A673 (cell line): ENCODE measurements at regions of chr17 and their contacts with region 1.

Region 1: DNA sequence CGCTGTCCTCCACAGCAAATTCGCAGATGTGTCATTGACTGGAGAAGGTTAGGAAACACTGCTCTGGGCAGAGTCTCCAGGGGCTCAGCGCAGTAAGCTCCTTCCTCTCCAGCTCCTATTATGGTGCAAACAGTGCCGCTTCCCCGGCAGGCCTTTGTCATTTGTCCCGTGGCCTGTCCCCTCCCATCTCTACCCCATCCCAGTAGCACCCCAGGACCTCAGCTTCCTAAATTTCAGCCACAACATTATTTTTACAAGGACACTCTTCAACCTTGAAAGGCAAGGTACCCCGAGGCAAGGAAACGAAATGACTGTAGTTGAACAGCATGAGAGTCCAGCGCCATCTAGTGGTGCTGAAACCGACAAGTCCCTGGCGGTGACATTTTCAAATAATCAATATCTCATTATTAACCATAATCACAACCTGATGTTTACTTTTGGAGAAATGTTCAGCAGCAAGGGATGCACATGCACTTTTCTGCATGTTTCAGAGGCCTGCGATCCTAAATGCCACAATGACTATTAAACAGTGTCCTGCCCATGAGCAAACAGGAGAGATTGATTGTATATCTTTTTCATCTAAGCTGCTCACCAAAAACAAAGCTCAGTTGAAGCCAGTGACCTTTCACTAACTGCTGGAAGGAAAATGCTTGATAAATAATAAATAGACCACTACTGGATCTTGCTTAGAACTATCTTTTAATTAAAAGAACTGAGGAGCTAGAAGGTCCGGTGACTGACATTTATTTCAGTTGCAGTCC is 16.5 kb downstream of the MRPS23 start:
- DNase-seq: peak; percentile 84
- H3K4me3 ChIP-seq: peak overlapping the region; percentile 39
- H3K27ac ChIP-seq: no peak overlapping the region
- H3K4me1 ChIP-seq: peaks cover 10% of the 10 kb centered on the region
- H3K27me3 ChIP-seq: no peaks in the 10 kb centered on the region
- CTCF ChIP-seq: peak; percentile 99

Region 2: DNA sequence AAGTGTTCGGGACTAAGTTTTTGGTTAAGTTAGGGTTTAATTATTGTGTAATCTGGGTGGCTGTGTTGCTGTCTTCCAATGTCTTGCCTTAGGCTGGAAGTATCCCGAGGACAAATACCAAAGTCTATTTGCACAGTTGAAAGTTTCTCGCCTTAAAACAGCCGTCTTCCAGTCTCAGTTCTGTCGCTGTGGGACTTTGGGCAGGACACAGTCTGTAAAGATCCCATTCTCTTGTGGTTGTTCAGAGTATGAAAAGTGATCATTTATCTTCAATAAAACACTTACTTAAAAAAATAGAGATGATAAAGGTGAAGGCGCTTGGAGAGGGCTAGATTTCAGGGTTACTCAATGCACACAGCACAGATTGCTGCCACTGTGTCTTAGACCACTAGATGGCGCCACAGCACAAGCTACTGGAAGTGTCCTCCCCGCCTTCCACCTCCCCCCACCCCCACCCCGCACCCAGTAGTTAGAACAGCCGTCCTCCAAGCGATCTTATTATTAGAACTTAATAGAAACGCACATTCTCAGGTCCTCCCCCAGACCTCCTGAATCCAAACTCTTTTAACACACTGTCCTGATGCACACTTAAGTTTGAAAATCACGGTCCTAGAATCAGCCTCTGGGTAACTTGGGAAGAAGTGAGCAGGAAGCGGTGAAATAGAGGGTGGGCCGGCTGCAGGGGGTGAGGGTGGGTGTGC is 702.4 kb before region 1 on chr17:
- CTCF ChIA-PET with region 1: interaction called, 4 read pairs
- POLR2A ChIA-PET with region 1: no interaction called
- intact Hi-C with region 1: loop called (anchors 1 kb)
- DNase-seq: peak; percentile 87
- H3K4me3 ChIP-seq: peak overlapping the region; percentile 28
- H3K27ac ChIP-seq: no peak overlapping the region
- H3K4me1 ChIP-seq: peaks cover 4% of the 10 kb centered on the region
- H3K27me3 ChIP-seq: no peaks in the 10 kb centered on the region
- CTCF ChIP-seq: peak; percentile 75

Region 3: DNA sequence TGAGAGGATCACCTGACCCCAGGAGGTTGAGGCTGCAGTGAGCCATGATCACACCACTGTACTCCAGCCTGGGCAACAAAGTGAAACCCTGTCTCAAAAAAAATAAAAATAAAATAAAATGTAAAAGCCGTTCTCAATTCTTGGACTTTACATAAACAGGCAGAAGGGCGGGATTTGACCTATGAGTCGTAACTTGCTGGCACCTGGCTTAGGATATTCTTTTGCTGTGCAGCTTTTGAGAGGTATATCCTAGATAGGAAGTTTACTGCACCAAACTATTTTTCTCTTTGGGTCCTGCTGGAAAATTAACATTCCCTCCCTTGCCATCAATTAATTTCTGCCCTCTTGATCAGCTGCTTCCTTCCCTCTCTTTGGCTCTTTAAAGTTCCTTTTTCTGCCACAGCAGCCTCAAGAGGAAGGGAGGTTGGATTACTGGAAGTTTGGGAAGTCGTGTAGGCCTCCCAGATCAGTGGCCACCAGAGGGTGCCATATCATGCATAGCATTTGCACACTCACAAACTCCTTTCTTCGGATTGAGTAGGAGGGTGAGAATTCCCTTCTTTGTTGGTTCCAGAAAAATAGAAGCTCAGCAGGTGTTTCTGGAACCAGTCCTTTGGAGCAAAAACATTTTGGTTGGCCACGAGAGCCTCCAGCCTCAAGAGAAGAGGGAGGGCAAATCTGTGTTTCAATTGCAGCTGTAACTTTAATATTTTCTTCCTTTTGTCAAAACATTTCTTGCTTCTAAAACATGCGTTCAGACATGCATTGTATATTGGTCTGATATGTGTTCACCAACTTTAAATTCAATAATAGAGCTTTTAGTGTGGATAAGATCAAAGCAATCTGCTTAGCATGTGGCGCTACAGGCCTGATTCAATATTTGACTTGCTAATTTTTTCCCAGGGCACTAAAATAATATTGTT is 235.6 kb before region 1 on chr17:
- CTCF ChIA-PET with region 1: interaction called, 3 read pairs
- POLR2A ChIA-PET with region 1: no interaction called
- intact Hi-C with region 1: loop called (anchors 1 kb)
- DNase-seq: peak; percentile 85
- H3K4me3 ChIP-seq: no peak overlapping the region
- H3K27ac ChIP-seq: no peak overlapping the region
- H3K4me1 ChIP-seq: peaks cover 10% of the 10 kb centered on the region
- H3K27me3 ChIP-seq: no peaks in the 10 kb centered on the region
- CTCF ChIP-seq: peak; percentile 92

Region 4: GRCh38 chr17:57747221-57748017 is 85.9 kb before region 1 on chr17:
- CTCF ChIA-PET with region 1: interaction called, 10 read pairs
- POLR2A ChIA-PET with region 1: no interaction called
- intact Hi-C with region 1: loop called (anchors 5 kb)
- DNase-seq: peak; percentile 77
- H3K4me3 ChIP-seq: no peak overlapping the region
- H3K27ac ChIP-seq: no peak overlapping the region
- H3K4me1 ChIP-seq: no peaks in the 10 kb centered on the region
- H3K27me3 ChIP-seq: no peaks in the 10 kb centered on the region
- CTCF ChIP-seq: peak; percentile 90

Region 5: DNA sequence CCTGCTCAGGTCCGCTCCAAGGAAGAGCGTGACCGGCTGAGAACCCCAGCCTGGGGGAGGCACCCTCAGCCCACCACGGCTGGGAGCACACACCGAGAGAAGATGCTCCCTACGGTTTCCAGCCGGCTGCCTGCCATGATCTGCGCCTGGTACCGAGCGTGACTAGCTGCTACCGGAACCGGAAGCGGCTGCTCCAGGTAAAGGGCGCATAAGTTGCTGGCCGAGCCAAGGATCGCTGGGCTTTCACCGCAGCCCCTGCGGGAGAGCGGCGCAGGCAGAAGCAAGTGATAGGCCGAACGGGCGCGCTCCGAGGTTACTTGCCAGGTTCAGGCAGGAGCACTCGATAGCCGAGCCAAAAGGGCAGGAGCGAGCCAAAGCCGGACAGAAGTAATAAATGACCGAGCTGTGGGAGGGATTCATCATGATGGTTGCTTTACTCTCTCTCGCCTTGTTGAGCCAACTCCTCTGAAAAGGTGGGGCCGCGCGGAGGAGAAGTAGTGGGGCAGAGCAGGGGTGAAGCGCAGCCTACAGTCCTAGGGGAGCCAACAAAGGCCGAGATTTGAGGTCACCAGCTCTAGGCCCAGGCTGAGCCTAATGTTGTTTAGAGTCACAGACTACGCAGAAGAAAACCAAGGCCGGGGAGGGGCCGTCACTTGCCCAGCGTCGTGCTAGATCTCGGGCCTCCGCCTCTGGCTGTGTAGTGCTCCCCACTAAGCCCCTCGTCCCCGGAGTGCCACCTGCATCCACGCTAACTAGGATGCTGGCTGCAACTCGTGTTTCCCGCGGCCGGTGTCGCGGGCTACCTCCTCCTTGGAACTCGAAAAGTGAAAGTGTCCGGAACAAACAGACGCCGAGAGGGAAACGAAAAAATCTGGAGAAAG is 16.8 kb after region 1 on chr17 and contains the start of gene MRPS23:
- CTCF ChIA-PET with region 1: interaction called, 11 read pairs
- POLR2A ChIA-PET with region 1: no interaction called
- intact Hi-C with region 1: no loop called
- DNase-seq: peak; percentile 99
- H3K4me3 ChIP-seq: peak within 1 kb of the TSS; percentile 85
- H3K27ac ChIP-seq: peak within 1 kb of the TSS; percentile 78
- H3K4me1 ChIP-seq: peaks cover 17% of the 10 kb centered on the region
- H3K27me3 ChIP-seq: no peaks in the 10 kb centered on the region
- CTCF ChIP-seq: no peak
- total RNA-seq, gene MRPS23: 94.2 and 100 TPM in 2 replicates

Region 6: GRCh38 chr17:58060596-58061191 is 227.3 kb after region 1 on chr17:
- CTCF ChIA-PET with region 1: no interaction called
- POLR2A ChIA-PET with region 1: no interaction called
- intact Hi-C with region 1: no loop called
- DNase-seq: no peak
- H3K4me3 ChIP-seq: no peak overlapping the region
- H3K27ac ChIP-seq: no peak overlapping the region
- H3K4me1 ChIP-seq: no peaks in the 10 kb centered on the region
- H3K27me3 ChIP-seq: peaks cover 4% of the 10 kb centered on the region
- CTCF ChIP-seq: no peak